Pancreas (tissue), 10 donors: ENCODE measurements at regions of chr6 and their contacts with region 1.

Region 1: GRCh38 chr6:40308533-40309306 is 278.4 kb downstream of the LRFN2 start:
- DNase-seq: peak; percentile 40 to 84 (median 69)
- ATAC-seq: peak; percentile 84 to 96 (median 92)
- H3K4me3 ChIP-seq: no peak overlapping the region
- H3K27ac ChIP-seq: no peak overlapping the region
- H3K4me1 ChIP-seq: no peaks in the 10 kb centered on the region
- H3K27me3 ChIP-seq: no peaks in the 10 kb centered on the region
- CTCF ChIP-seq: peak; percentile 89 to 95 (median 92)

Region 2: GRCh38 chr6:39980839-39981580 is 327.7 kb before region 1 on chr6:
- intact Hi-C with region 1: loop called (anchors 5 to 10 kb)
- DNase-seq: peak in 2 of 6 donors; percentile 38 to 49
- ATAC-seq: peak; percentile 89 to 95 (median 94)
- H3K4me3 ChIP-seq: no peak overlapping the region
- H3K27ac ChIP-seq: no peak overlapping the region
- H3K4me1 ChIP-seq: peaks cover 0 to 8% (median 3%) of the 10 kb centered on the region in 3 donors
- H3K27me3 ChIP-seq: no peaks in the 10 kb centered on the region
- CTCF ChIP-seq: peak in 2 of 4 donors; percentile 21 to 43

Region 3: GRCh38 chr6:40232698-40233097 is 76.0 kb before region 1 on chr6:
- intact Hi-C with region 1: no loop called
- DNase-seq: no peak
- ATAC-seq: no peak
- H3K4me3 ChIP-seq: no peak overlapping the region
- H3K27ac ChIP-seq: no peak overlapping the region
- H3K4me1 ChIP-seq: no peaks in the 10 kb centered on the region
- H3K27me3 ChIP-seq: no peaks in the 10 kb centered on the region
- CTCF ChIP-seq: no peak

Region 4: DNA sequence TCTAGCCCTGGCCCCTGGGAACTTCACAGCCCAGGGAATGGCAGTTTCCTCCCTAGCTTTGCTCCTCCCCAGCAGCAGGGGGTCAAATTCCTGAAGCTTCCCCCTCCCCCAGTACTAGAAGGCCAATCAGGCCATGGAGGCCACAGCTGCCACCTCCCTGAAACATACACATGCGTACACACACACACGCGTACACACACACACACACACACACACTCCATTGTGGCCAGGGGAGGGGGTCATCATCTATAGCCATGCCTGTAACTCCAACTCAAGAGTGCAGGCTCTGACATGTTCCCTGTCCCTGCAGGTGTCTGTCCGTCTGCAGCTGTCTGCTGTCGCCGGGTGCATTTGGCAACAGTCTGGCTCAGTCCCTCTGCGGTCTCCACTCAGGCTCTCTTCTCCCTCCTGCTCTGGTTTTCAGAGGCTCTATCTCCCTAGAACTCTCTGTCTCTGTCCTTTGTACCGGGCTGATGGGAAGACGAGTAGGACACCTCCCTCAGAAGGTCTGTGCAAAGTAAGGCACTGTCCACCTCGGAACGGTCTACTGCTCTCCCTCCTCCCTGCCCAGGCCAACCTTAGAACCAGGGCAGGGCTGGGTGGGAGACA is 277.0 kb after region 1 on chr6:
- intact Hi-C with region 1: no loop called
- DNase-seq: peak in 1 of 6 donors; percentile 12
- ATAC-seq: no peak
- H3K4me3 ChIP-seq: no peak overlapping the region
- H3K27ac ChIP-seq: no peak overlapping the region
- H3K4me1 ChIP-seq: peaks cover 0 to 10% (median 0%) of the 10 kb centered on the region in 3 donors
- H3K27me3 ChIP-seq: no peaks in the 10 kb centered on the region
- CTCF ChIP-seq: no peak